H1 (cell line): ENCODE measurements at regions of chr2 and their contacts with region 1.

Region 1: DNA sequence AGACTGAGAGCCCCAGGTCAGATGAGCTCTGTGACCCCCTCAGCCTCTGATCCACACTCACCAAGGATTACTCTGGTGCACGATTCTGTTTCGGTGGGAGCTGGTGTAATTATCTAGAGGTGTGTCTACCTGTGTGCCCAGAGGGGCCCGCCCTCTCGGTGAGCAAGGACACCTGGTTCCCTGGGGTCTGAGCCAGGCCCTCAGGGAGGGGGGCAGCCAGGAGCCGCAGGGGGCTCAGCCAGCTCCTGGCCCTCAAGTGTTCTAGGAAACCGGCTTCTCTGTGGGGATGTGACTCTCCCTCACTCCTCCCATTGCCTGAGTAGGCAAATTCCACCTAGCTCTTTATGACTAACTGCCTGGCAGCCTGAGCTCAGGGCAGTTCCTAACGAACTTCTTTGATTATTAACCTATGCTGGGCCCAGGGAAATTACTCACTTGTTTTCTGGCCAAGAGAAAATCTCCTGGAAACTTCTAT is 17.4 kb downstream of the AGAP1 start:
- DNase-seq: no peak
- H3K4me3 ChIP-seq: no peak overlapping the region
- H3K27ac ChIP-seq: no peak overlapping the region
- H3K4me1 ChIP-seq: peaks cover 0 to 8% (median 3%) of the 10 kb centered on the region in 4 experiments; a peak in 3 of 7 replicates
- H3K27me3 ChIP-seq: no peaks in the 10 kb centered on the region; a peak in 1 of 7 replicates
- CTCF ChIP-seq: no peak
- EP300 ChIP-seq: no peak
- POLR2A ChIP-seq: no peak
- RAD21 ChIP-seq: no peak

Region 2: GRCh38 chr2:235216901-235217300 is 294.3 kb before region 1 on chr2:
- CTCF ChIA-PET with region 1: no interaction called
- POLR2A ChIA-PET with region 1: no interaction called
- DNase-seq: no peak
- H3K4me3 ChIP-seq: no peak overlapping the region
- H3K27ac ChIP-seq: no peak overlapping the region
- H3K4me1 ChIP-seq: peaks cover 0 to 7% (median 2%) of the 10 kb centered on the region in 4 experiments; a peak in 2 of 7 replicates
- H3K27me3 ChIP-seq: no peaks in the 10 kb centered on the region
- CTCF ChIP-seq: no peak
- EP300 ChIP-seq: no peak
- POLR2A ChIP-seq: no peak
- RAD21 ChIP-seq: no peak

Region 3: GRCh38 chr2:235463893-235464292 is 47.3 kb before region 1 on chr2:
- CTCF ChIA-PET with region 1: no interaction called
- POLR2A ChIA-PET with region 1: no interaction called
- DNase-seq: no peak
- H3K4me3 ChIP-seq: no peak overlapping the region
- H3K27ac ChIP-seq: no peak overlapping the region
- H3K4me1 ChIP-seq: peaks cover 0 to 1% (median 1%) of the 10 kb centered on the region in 4 experiments; a peak in 3 of 7 replicates
- H3K27me3 ChIP-seq: no peaks in the 10 kb centered on the region
- CTCF ChIP-seq: no peak
- EP300 ChIP-seq: no peak
- POLR2A ChIP-seq: no peak
- RAD21 ChIP-seq: no peak

Region 4: DNA sequence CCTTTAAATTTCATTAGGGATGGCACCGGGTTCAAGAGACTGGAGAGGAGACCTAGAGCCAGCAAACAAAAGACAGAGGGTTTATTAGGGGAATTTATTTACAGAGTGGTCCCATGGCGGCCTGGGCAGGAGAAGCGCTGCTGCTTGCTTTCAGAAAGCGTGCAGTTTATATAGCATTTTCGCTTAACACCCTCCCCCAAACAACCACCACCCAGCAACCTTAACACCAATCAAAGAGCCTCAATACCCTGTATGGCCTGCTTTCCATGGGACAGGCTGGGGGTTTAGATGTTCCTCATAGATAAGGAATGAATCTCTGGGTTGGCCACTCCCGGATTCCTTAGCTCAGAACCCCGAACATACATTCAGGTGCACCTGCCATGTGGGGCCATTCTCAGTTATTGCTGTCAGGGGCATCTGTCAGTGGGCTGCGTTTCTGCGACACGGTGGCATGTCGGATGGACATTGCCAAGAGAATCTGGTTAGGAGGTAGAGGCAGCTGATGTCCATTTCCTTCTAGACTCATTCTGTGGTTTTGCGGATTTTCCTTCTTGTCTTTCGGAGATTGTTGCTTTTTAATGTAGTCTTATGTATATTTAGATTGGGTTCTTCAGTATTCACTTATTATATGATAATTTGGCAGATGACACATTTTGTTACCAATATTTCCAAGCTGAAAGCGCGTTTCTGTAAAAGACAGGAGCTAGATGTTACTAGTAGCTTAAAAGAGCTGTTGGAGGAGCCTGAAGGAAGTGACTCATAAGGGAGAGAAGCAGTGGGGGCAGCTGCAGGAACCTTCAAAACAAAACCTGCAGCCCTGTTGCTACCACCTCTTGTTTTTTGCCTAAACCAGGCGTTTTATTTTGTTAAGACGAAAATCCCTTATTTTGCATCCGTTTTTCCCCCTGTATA is 10.2 kb before region 1 on chr2:
- CTCF ChIA-PET with region 1: interaction called, 83 read pairs
- POLR2A ChIA-PET with region 1: interaction called, 4 read pairs
- DNase-seq: no peak
- H3K4me3 ChIP-seq: peak overlapping the region in 1 of 4 experiments; percentile 17; a peak in 1 of 8 replicates
- H3K27ac ChIP-seq: no peak overlapping the region
- H3K4me1 ChIP-seq: peaks cover 25 to 51% (median 38%) of the 10 kb centered on the region in 4 experiments
- H3K27me3 ChIP-seq: no peaks in the 10 kb centered on the region
- CTCF ChIP-seq: no peak
- EP300 ChIP-seq: no peak
- POLR2A ChIP-seq: no peak
- RAD21 ChIP-seq: no peak

Region 5: GRCh38 chr2:235685024-235685721 is 173.9 kb after region 1 on chr2:
- CTCF ChIA-PET with region 1: no interaction called
- POLR2A ChIA-PET with region 1: no interaction called
- DNase-seq: no peak
- H3K4me3 ChIP-seq: no peak overlapping the region
- H3K27ac ChIP-seq: no peak overlapping the region; the same call in 1 of the 2 replicates
- H3K4me1 ChIP-seq: no peaks in the 10 kb centered on the region; a peak in 2 of 7 replicates
- H3K27me3 ChIP-seq: no peaks in the 10 kb centered on the region
- CTCF ChIP-seq: no peak
- EP300 ChIP-seq: no peak
- POLR2A ChIP-seq: no peak
- RAD21 ChIP-seq: no peak

Region 6: DNA sequence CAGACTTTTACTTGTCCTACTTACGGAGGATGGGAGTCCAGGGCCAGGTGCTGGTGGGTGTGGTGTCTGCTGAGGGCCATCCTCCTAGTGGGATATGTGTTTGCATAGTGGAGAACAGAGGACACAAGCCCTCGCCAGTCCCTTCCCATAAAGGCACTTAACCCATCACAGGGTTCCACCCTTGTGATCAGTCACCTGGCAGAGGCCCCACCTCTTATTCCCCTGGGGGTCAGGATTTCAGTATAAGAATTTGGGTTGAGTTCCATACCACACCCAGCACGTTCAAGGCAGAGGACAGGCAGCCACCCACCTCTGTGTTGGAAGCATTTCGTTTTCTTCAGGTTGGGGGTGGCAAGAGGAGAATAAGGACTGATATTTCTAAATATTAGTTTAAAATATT is 241.7 kb after region 1 on chr2:
- CTCF ChIA-PET with region 1: no interaction called
- POLR2A ChIA-PET with region 1: no interaction called
- DNase-seq: no peak
- H3K4me3 ChIP-seq: no peak overlapping the region
- H3K27ac ChIP-seq: no peak overlapping the region
- H3K4me1 ChIP-seq: peaks cover 2 to 18% (median 9%) of the 10 kb centered on the region in 4 experiments
- H3K27me3 ChIP-seq: no peaks in the 10 kb centered on the region
- CTCF ChIP-seq: no peak
- EP300 ChIP-seq: no peak
- POLR2A ChIP-seq: no peak
- RAD21 ChIP-seq: no peak